Esophagus squamous epithelium (tissue), 5 donors: ENCODE measurements at regions of chr10 and their contacts with region 1.

Region 1: DNA sequence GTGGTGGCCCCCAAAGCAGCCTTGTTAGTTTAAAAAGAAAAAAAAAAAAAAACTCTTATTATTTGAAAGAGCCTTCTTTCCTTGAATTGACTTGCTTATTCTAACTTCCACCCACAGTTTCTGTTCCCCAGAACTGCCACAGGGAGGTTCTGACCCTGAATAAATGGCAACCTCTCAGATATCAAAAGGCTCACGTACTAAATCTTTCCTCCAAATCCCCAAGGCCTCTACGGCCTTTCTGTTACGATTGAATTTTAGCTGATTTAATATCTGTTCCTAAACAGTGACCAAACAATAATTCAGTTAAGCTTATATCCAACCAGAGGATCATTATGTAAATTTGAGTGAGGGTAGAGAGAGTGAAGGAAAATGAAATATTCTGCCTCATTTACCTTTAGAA is 482.8 kb downstream of the GFRA1 start:
- DNase-seq: no peak
- H3K4me3 ChIP-seq: no peak overlapping the region
- H3K27ac ChIP-seq: no peak overlapping the region
- H3K4me1 ChIP-seq: no peaks in the 10 kb centered on the region
- H3K27me3 ChIP-seq: no peaks in the 10 kb centered on the region
- CTCF ChIP-seq: no peak
- POLR2A ChIP-seq: no peak

Region 2: GRCh38 chr10:115073796-115074195 is 716.4 kb before region 1 on chr10:
- intact Hi-C with region 1: no loop called
- DNase-seq: no peak
- H3K4me3 ChIP-seq: no peak overlapping the region
- H3K27ac ChIP-seq: no peak overlapping the region
- H3K4me1 ChIP-seq: no peaks in the 10 kb centered on the region
- H3K27me3 ChIP-seq: no peaks in the 10 kb centered on the region
- CTCF ChIP-seq: no peak
- POLR2A ChIP-seq: no peak

Region 3: DNA sequence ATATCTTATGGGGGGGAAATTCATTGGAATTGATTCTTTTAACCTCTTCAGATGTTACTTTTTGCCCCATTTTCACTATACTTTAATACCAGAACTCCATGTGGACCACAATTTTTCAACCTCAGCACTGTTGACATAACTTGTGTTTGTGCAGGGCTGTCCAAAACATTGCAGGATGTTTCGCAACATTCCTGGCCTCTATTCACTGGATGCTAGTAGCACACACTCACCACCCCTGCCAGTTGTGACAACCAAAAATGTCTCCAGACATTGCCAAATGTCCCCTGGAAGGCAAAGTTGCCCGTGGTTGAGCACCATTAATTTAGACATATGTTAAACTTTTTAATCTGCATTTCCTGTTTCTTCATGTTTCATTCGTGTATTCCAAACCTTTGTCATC is 248.0 kb after region 1 on chr10:
- intact Hi-C with region 1: no loop called
- DNase-seq: no peak
- H3K4me3 ChIP-seq: no peak overlapping the region
- H3K27ac ChIP-seq: no peak overlapping the region
- H3K4me1 ChIP-seq: no peaks in the 10 kb centered on the region
- H3K27me3 ChIP-seq: no peaks in the 10 kb centered on the region
- CTCF ChIP-seq: no peak
- POLR2A ChIP-seq: no peak

Region 4: DNA sequence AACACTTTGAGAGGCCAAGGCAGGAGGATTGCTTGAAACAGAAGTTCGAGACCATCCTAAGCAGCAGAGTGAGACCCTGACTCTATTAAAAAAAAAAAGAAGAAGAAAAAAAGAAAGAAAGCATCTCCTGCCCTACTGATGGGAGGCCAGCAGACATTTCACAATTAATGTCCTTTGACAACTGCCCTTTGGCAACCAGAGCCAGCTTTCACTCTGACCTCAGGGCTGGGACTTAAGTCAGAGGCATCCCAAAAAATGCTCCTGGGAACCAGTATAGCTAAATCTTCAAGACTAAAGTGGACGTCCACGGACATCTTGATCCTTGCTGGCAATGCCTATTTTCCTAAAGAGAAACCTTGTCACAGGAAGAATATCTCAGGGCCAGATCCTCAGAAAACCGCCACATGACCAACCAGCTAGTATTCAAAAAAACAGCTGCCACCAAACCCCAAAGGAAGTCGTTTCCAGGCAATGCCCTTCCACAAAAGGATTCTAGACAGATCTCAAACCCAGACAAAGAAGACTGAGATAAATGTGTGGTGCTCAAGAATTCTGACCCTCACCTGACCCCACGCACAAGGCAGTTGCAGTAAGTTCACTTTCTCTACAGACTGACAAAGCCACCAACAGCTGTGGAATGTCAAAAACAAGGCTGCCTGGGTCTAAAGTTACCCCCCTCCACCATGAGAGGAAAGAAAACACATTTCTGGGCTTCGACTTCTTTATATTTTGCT is 464.4 kb after region 1 on chr10:
- intact Hi-C with region 1: no loop called
- DNase-seq: no peak
- H3K4me3 ChIP-seq: no peak overlapping the region
- H3K27ac ChIP-seq: no peak overlapping the region
- H3K4me1 ChIP-seq: no peaks in the 10 kb centered on the region
- H3K27me3 ChIP-seq: peaks cover 0 to 2% (median 0%) of the 10 kb centered on the region in 4 donors
- CTCF ChIP-seq: no peak
- POLR2A ChIP-seq: no peak

Region 5: GRCh38 chr10:116287906-116288501 is 497.8 kb after region 1 on chr10:
- intact Hi-C with region 1: loop called (anchors 10 kb)
- DNase-seq: no peak
- H3K4me3 ChIP-seq: no peak overlapping the region
- H3K27ac ChIP-seq: no peak overlapping the region
- H3K4me1 ChIP-seq: no peaks in the 10 kb centered on the region
- H3K27me3 ChIP-seq: no peaks in the 10 kb centered on the region
- CTCF ChIP-seq: peak; percentile 21 to 65 (median 52)
- POLR2A ChIP-seq: no peak